ENCODE measurements at regions of chr1 and their contacts with region 1.

Region 1: DNA sequence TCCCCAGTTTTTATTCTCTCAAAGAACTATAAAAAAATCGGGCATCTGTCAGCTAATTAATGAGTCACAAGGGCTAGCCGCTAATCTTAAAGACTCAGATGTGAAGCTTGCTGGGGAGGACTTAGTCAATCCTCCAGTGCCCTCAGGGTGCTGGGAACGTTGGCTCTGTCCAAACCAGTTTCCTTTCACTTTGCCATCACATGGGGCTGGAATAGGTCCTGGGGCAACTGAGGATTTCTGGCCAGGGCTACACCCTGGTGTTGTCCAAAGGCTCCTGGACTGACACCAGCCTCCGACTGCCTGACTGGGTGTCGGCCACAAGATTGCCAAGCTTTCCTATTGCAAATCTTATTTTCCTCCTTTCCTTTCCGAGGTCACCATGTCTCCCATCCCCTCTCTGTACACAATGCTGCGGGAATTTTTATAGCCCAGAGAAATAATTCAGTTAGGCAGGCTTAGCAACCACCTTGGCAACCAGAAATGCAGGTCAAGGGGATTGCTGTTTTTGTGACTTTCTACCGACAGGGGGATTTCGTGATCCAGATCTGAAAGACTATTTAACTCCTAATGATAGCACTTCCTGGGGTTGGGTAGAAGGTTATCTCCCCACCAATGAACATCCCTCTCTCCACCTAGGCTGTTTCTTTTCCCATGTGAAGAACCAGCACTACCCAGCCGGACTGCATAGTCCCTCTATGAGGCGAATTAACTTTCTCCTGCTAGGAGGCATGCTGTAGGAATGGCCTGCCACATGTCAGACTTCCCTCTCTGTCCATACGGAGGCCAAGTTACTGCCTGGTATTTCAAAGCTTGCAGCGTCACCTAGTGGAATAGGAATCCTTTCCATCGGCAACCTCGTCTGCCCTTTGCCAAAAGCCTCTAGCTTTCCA is 29.9 kb upstream of the CTBS start:
- DNase-seq: peak; percentile 91
- H3K4me3 ChIP-seq: peak overlapping the region in 2 of 3 experiments; percentile 11 to 46
- H3K27ac ChIP-seq: peak overlapping the region; percentile 88
- H3K4me1 ChIP-seq: peaks cover 30% of the 10 kb centered on the region
- H3K27me3 ChIP-seq: no peaks in the 10 kb centered on the region
- CTCF ChIP-seq: peak; percentile 66 to 77
- POLR2A ChIP-seq: no peak

Region 2: DNA sequence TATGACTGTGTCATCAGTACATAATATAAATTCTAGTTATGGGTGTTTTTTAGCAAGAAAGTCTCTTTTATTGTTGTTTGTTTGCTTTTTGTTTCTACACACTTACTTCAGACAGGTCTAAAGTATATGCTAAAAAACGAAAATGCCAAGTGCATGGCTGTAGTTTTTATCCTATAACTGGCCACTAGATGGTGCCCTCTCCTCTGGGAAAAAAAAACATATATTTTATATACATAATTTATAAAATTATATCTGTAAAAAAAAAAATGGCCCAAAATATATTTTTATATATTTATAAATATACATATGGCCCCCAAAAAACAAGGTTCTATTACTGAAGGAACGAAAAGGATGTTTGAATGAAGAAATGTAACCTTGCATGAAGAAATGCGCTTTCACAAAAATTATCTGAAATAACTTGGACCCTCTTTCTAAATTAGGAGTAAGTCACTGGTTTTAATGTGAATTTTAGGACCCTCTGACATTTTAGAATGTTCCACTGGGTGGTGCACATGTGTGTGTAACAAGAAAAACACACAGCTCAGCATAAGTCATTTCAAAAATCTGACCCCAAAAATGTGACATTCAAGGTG is 698.8 kb before region 1 on chr1:
- CTCF ChIA-PET with region 1: interaction called, 4 read pairs
- POLR2A ChIA-PET with region 1: no interaction called
- dilution Hi-C with region 1: no loop called
- intact Hi-C with region 1: loop called (anchors 1 kb)
- DNase-seq: peak; percentile 39
- H3K4me3 ChIP-seq: no peak overlapping the region
- H3K27ac ChIP-seq: no peak overlapping the region
- H3K4me1 ChIP-seq: peaks cover 3% of the 10 kb centered on the region
- H3K27me3 ChIP-seq: no peaks in the 10 kb centered on the region
- CTCF ChIP-seq: peak; percentile 21 to 56
- POLR2A ChIP-seq: no peak

Region 3: DNA sequence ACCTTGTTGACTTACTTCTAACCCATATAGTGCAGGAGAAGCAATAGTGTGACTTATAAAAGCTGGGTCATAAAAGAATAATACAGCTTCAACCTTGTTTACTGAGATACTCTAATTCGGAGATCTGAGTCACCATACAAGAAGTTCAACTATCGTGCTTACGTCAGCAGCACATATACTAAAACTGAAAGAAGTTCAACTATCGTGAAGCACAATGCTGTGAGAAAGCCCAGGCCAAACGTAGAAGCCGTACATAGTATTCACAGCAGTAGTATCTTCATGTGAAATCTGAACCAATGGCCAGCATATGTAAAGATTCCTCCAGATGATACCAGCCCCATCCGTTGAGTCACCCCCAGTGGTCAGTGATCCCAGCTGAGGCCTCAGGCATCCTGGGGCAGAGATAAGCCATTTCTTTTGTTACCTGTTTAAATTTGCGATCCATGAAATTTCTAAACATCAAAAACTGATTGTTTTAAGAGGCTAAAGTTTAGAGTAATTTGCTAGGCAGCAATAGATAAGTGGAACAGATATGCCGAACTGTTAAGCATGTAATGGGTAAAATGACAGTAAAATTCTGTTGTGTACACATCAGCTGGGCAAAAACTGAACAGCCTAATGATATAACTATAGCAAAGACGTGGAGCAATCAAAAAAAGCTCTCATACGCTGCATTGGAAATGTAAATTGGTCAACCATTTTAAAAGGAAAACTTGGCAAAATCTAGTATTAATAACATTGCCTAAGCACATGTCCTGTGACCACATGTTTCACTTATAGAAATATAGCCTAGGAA is 356.6 kb before region 1 on chr1:
- CTCF ChIA-PET with region 1: no interaction called
- POLR2A ChIA-PET with region 1: no interaction called
- dilution Hi-C with region 1: no loop called
- intact Hi-C with region 1: loop called (anchors 2 kb)
- DNase-seq: no peak
- H3K4me3 ChIP-seq: peak overlapping the region in 1 of 3 experiments; percentile 18
- H3K27ac ChIP-seq: peak overlapping the region; percentile 90
- H3K4me1 ChIP-seq: peaks cover 35% of the 10 kb centered on the region
- H3K27me3 ChIP-seq: no peaks in the 10 kb centered on the region
- CTCF ChIP-seq: no peak
- POLR2A ChIP-seq: no peak

Region 4: DNA sequence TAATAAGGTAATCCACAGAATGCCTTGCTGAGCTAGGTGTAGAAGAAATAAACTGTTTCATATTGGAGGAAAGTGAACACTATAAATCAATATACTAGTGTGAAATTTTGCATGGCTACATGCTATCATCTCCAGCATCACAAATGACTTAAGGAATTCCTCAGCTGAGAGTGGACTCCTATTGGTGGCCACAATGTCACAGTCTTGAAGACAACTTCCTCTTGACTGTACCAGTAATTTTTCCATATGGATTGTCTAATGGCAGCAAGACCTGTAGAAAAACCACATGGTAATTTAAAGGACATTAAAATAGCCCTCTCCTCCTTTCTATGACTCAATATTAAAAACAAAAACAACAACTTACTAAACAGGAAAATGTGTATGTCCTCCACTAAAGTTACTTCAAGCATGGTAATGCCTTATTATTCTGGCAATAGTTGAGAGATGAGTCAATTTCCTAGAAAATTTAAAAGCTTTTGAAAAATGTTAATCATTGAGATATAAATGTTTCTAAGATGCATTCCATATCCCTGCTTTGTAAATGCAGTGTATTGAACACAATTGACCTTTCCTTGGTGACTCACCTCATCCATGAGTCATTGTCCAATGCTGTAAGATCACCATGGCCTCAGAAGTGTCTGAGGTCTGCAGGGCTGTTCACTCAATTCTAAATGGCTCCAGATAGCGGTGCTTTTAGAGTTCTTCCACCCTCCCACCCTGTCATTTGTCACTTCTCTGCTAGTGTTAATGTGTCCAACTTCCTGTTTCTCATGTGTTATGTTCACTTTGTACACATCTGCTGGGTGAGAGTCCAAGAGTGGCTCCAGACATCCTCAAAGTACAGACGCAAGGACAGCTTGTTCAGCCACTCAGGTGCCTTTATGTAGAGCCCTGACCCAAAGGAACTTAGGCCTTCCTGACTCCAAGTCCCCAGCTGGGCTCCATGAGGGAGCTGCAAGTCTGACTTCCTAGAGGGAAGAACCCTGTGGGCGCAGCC is 238.7 kb before region 1 on chr1:
- CTCF ChIA-PET with region 1: no interaction called
- POLR2A ChIA-PET with region 1: no interaction called
- dilution Hi-C with region 1: no loop called
- intact Hi-C with region 1: loop called (anchors 1 kb)
- DNase-seq: peak; percentile 96
- H3K4me3 ChIP-seq: no peak overlapping the region
- H3K27ac ChIP-seq: peak overlapping the region; percentile 97
- H3K4me1 ChIP-seq: peaks cover 28% of the 10 kb centered on the region
- H3K27me3 ChIP-seq: no peaks in the 10 kb centered on the region
- CTCF ChIP-seq: no peak
- POLR2A ChIP-seq: peak; percentile 51

Region 5: GRCh38 chr1:84442256-84442655 is 161.9 kb before region 1 on chr1:
- CTCF ChIA-PET with region 1: interaction called, 124 read pairs
- POLR2A ChIA-PET with region 1: no interaction called
- dilution Hi-C with region 1: loop called (anchors 25 kb)
- intact Hi-C with region 1: loop called (anchors 1 kb)
- DNase-seq: peak; percentile 89
- H3K4me3 ChIP-seq: no peak overlapping the region
- H3K27ac ChIP-seq: no peak overlapping the region
- H3K4me1 ChIP-seq: peaks cover 2% of the 10 kb centered on the region
- H3K27me3 ChIP-seq: no peaks in the 10 kb centered on the region
- CTCF ChIP-seq: peak; percentile 18 to 26
- POLR2A ChIP-seq: no peak

Region 6: DNA sequence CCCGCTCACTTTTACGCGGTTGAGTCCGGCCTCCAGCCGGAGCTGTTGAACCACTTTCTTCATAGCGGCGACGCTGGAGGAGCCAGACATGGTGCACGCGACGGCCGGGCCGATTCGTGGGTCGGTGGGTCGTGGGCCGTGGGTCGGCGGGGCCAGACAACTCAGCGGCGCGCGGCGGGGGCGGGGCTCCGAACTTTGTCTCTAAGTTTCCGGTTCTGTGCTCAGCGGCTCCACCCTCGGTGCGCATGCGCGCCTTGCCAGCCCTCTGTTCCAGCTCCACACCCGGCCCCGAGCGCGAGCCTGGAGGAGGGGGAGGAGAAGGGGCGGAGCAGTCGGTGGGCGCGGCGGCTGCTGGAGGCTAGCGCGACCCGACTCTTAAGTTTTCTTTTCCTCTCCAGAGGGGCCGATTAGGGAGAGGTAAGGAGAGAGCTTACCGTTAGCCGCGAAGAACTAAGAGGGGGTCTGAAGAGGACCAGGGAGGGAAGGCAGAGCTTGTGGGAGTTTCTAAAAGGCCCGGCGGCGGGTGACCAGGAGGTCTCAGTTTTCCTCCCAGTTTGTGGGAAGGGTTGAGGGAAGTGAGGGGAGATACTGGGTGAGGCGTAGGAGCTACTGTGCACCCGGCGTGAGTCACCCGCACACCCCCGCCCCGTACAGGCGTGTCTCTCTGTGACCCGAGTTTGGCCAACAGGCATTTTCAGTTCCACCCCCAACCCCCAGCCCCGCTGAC is 98.0 kb before region 1 on chr1 and contains the starts of genes GNG5 and SPATA1:
- CTCF ChIA-PET with region 1: interaction called, 37 read pairs
- POLR2A ChIA-PET with region 1: interaction called, 11 read pairs
- dilution Hi-C with region 1: no loop called
- intact Hi-C with region 1: loop called (anchors 1 kb)
- DNase-seq: peak; percentile 97
- H3K4me3 ChIP-seq: peak within 1 kb of the TSS; percentile 55 to 89 (median 73)
- H3K27ac ChIP-seq: peak within 1 kb of the TSS; percentile 91
- H3K4me1 ChIP-seq: peaks cover 25% of the 10 kb centered on the region
- H3K27me3 ChIP-seq: no peaks in the 10 kb centered on the region
- CTCF ChIP-seq: no peak
- POLR2A ChIP-seq: peak; percentile 81
- total RNA-seq, gene GNG5: 172 and 175 TPM in 2 replicates
- total RNA-seq, gene SPATA1: 1.7 and 2.6 TPM in 2 replicates

Region 7: GRCh38 chr1:84753516-84754385 is 149.6 kb after region 1 on chr1:
- CTCF ChIA-PET with region 1: interaction called, 21 read pairs
- POLR2A ChIA-PET with region 1: no interaction called
- dilution Hi-C with region 1: no loop called
- intact Hi-C with region 1: no loop called
- DNase-seq: peak; percentile 71
- H3K4me3 ChIP-seq: no peak overlapping the region
- H3K27ac ChIP-seq: no peak overlapping the region
- H3K4me1 ChIP-seq: no peaks in the 10 kb centered on the region
- H3K27me3 ChIP-seq: peaks cover 8 to 12% of the 10 kb centered on the region in 2 experiments
- CTCF ChIP-seq: peak; percentile 90 to 93
- POLR2A ChIP-seq: no peak